PC-3 (cell line): ENCODE measurements at regions of chr1 and their contacts with region 1.

Region 1: DNA sequence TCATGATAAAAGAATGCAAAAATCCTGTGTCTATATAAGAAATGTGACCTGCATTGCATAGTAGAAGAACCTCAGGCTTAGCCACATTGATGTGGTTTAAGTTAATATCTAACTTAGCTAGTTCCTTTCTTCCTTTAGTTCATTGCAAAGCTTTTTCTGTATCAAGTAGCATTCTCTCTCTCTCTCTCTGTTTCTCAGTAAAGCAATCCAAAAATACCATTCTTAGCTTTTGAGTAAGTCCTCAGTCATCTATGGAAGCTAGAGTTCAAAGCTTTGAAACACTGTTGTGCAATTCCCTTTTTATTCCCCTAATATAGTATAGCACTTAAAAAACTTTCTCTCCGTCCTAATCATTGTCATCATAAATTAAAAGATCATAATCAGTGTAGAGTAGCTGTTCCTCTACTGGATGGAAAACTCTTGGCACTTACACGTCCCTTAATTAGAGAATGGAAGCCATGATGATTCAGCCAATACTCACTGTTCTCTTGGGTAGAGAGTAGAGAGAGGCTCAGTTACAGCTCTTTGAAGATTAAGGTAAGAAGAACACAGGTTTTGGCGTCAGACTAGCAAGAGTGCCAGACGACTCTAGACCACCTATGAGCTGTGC is 350.3 kb upstream of the LYPLAL1 start:
- DNase-seq: peak; percentile 48
- ATAC-seq: no peak
- H3K4me3 ChIP-seq: no peak overlapping the region
- H3K27ac ChIP-seq: no peak overlapping the region
- H3K4me1 ChIP-seq: 0 out of 2 replicates have a peak, but pooled peaks cover 4% of the 10 kb centered on the region
- H3K27me3 ChIP-seq: no peaks in the 10 kb centered on the region
- CTCF ChIP-seq: no peak

Region 2: GRCh38 chr1:218711884-218712674 is 111.3 kb before region 1 on chr1:
- CTCF ChIA-PET with region 1: interaction called, 12 read pairs
- POLR2A ChIA-PET with region 1: no interaction called
- intact Hi-C with region 1: no loop called
- DNase-seq: peak; percentile 87
- ATAC-seq: peak; percentile 78
- H3K4me3 ChIP-seq: no peak overlapping the region
- H3K27ac ChIP-seq: peak overlapping the region; percentile 17
- H3K4me1 ChIP-seq: peaks cover 19% of the 10 kb centered on the region
- H3K27me3 ChIP-seq: no peaks in the 10 kb centered on the region
- CTCF ChIP-seq: no peak

Region 3: DNA sequence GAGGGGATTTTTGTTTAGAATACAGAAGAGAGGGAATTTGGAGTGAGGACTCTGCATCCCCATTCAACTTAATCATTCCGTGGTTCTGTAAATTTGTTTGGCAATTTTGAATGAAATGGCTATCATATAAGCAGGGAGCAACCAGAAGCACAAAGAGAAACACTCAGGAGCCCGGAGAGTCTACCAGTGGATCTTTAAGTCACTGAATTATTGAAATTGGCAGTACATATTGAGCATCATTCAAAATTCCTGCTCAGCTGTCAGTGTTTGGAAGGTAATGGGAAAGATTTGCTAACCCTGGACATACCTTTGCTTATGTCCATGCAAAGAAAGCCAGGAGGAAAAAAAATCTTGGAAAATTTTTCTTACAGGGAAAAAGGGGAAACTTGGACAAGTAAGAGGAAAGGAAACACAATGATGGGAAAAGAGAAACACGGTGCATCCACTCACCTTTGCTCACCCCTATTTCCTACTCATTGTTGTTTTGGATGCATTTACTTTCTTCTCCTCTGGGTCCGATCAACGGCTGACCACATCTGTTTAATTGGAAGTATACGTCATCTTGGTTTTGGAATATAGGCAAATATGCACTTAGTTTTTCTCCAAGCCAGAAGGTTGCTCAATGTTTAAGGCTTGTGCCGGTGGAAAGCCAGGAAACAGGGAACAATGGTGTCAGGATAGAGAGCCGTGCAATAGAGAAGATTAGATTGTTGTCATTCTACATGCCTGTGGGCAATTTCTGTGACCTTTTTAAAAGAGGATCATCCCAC is 107.3 kb after region 1 on chr1:
- CTCF ChIA-PET with region 1: no interaction called
- POLR2A ChIA-PET with region 1: interaction called, 15 read pairs
- intact Hi-C with region 1: no loop called
- DNase-seq: peak; percentile 52
- ATAC-seq: no peak
- H3K4me3 ChIP-seq: no peak overlapping the region
- H3K27ac ChIP-seq: no peak overlapping the region
- H3K4me1 ChIP-seq: no peaks in the 10 kb centered on the region
- H3K27me3 ChIP-seq: no peaks in the 10 kb centered on the region
- CTCF ChIP-seq: no peak